H1 (cell line): ENCODE measurements at regions of chr9 and their contacts with region 1.

Region 1: GRCh38 chr9:120856700-120857099 is 14.0 kb upstream of the PSMD5 start:
- DNase-seq: no peak
- H3K4me3 ChIP-seq: no peak overlapping the region
- H3K27ac ChIP-seq: no peak overlapping the region
- H3K4me1 ChIP-seq: peaks cover 0 to 12% (median 8%) of the 10 kb centered on the region in 4 experiments; a peak in 6 of 7 replicates
- H3K27me3 ChIP-seq: no peaks in the 10 kb centered on the region
- CTCF ChIP-seq: no peak
- EP300 ChIP-seq: no peak
- POLR2A ChIP-seq: no peak
- RAD21 ChIP-seq: no peak

Region 2: GRCh38 chr9:120842690-120843499 is 13.8 kb before region 1 on chr9 and contains the start of gene PSMD5:
- CTCF ChIA-PET with region 1: interaction called, 4 read pairs
- POLR2A ChIA-PET with region 1: interaction called, 13 read pairs
- DNase-seq: peak; percentile 85 to 96
- H3K4me3 ChIP-seq: peak within 1 kb of the TSS; percentile 91 to 97 (median 94)
- H3K27ac ChIP-seq: peak within 1 kb of the TSS; percentile 87
- H3K4me1 ChIP-seq: peaks cover 0 to 12% (median 6%) of the 10 kb centered on the region in 4 experiments; a peak in 4 of 7 replicates
- H3K27me3 ChIP-seq: no peaks in the 10 kb centered on the region
- CTCF ChIP-seq: no peak; a peak in 1 of 4 replicates
- EP300 ChIP-seq: no peak
- POLR2A ChIP-seq: peak; percentile 87 to 95
- RAD21 ChIP-seq: peak in 1 of 2 experiments; percentile 22; a peak in 1 of 4 replicates
- total RNA-seq, gene PSMD5: 30.0 and 30.5 TPM in 2 replicates